ENCODE measurements at regions of chr7 and their contacts with region 1.

Region 1: DNA sequence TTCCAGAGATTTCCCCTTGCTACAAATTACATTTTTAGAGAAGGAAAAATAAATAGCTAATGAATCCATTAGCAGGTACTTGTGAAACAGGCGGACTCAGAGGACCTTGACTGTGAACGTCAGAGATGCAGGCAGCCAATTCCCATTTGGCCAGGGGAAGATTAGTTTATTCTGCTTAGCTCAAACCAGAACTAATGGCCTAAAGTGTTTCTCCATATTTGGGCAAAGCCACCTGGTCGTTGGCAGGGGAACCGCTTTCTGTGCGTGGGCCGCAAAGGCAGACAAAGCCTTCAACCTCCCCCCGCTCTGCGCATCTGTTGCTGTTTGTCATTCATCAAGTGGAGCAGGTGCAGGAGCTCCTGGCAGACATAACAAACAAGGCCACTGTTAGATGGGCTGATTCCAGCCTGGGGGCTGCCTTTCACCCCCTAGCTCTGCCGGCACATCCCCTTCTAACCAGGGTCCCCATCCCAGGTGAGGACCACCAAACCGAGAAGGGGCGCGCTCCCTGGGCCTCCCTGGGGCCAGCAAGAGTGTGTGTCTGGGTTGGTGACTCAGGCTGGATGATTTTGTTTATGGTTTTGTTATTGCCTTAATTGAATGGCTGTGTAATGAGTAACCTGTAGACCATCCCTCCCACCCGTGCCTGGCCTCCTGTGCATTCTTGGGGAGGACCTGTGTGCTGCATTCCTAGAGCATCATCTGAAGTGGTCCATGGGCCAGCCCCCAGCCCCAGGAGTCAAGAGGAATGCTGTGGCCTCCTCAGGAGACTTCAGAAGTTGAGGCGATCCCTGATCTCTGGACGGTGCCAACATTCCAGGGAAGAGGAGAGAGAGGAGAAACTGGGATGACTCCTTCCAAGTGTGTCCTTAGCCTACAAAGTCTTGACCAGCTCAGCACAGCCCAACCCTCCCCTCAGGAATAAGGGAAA is 14.5 kb upstream of the CPA1 start:
- DNase-seq: no peak
- ATAC-seq: no peak
- H3K4me3 ChIP-seq: no peak overlapping the region
- H3K27ac ChIP-seq: no peak overlapping the region
- H3K4me1 ChIP-seq: peaks cover 65% of the 10 kb centered on the region
- H3K27me3 ChIP-seq: peaks cover 1 to 24% of the 10 kb centered on the region in 2 experiments; a peak in 4 of 5 replicates
- CTCF ChIP-seq: no peak
- EP300 ChIP-seq: no peak
- POLR2A ChIP-seq: no peak
- RAD21 ChIP-seq: no peak

Region 2: GRCh38 chr7:130468612-130469011 is 102.8 kb after region 1 on chr7:
- CTCF ChIA-PET with region 1: no interaction called
- POLR2A ChIA-PET with region 1: no interaction called
- in situ Hi-C with region 1: no loop called
- intact Hi-C with region 1: loop called (anchors 5 kb)
- DNase-seq: no peak
- ATAC-seq: no peak
- H3K4me3 ChIP-seq: no peak overlapping the region
- H3K27ac ChIP-seq: no peak overlapping the region
- H3K4me1 ChIP-seq: no peaks in the 10 kb centered on the region
- H3K27me3 ChIP-seq: no peaks in the 10 kb centered on the region
- CTCF ChIP-seq: no peak
- EP300 ChIP-seq: no peak
- POLR2A ChIP-seq: no peak
- RAD21 ChIP-seq: no peak

Measured in HepG2 (cell line).